Activated T-helper 2 cell treated with anti-CD3 and anti-CD28 coated beads, Interferon-gamma antibody, Interleukin-2, Interleukin-4, amounts not matched to agents 10 μg/mL and 5 μg/mL and 100 μg/mL, durations not matched to agents 14 hours and 24 hours and 36 hours (primary cell): ENCODE measurements at regions of chr20 and their contacts with region 1.

Region 1: DNA sequence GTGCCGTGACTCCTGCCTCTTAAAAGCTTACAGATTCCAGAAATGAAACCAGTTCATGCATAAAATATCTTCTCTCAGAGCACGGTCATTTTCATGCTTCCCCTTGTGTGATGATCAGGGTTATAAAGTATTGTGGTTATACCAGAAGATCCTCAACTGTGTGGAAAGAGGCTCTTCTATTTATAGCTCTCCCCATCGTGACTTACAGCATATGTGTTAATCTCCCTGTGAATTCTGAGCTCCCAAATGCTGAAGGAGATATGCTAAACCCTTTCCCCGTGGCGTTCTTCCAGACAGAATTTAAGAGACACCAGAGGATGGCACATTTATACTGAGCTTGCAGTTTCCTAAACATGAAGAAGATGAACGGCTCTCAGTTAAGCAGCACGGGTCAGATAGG is 158.8 kb downstream of the CDH26 start:
- DNase-seq: no peak
- H3K4me3 Mint-ChIP-seq: no peak overlapping the region
- H3K27ac Mint-ChIP-seq: no peak overlapping the region
- H3K4me1 Mint-ChIP-seq: no peaks in the 10 kb centered on the region
- H3K27me3 Mint-ChIP-seq: peaks cover 11% of the 10 kb centered on the region

Region 2: GRCh38 chr20:59880198-59880597 is 236.9 kb before region 1 on chr20:
- intact Hi-C with region 1: no loop called
- DNase-seq: no peak
- H3K4me3 Mint-ChIP-seq: no peak overlapping the region
- H3K27ac Mint-ChIP-seq: no peak overlapping the region
- H3K4me1 Mint-ChIP-seq: no peaks in the 10 kb centered on the region
- H3K27me3 Mint-ChIP-seq: no peaks in the 10 kb centered on the region

Region 3: DNA sequence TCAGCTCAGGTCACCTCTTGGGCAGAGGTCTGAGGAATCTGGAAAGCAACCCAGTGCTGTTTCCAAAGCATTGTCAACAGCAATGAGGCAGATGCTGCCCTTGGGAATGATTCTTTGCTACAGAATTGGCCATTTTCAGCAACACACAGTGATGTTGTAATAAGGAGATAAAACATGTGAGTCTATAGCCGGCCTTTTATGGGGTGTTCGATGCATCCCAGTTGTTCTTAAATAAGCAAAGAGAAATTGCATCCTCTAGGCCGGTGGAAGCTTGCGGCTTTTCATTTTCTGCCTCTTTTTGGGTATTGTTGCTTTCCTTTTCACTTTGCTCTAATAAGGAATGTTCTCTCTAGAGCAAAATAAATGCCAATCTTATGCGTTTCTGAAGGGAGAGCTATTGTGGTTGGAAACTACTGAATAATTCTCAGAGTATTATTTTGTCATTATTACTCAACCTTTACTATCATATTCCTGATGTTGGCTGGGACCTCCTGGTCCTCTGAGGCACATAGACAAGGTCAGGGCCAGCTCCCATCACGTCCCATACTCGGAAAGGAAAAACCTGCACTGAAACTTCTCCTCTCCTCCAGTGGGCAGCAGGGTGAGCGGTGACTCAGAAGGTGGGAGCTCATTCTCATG is 55.4 kb after region 1 on chr20:
- intact Hi-C with region 1: loop called (anchors 10 kb)
- DNase-seq: no peak
- H3K4me3 Mint-ChIP-seq: no peak overlapping the region
- H3K27ac Mint-ChIP-seq: no peak overlapping the region
- H3K4me1 Mint-ChIP-seq: no peaks in the 10 kb centered on the region
- H3K27me3 Mint-ChIP-seq: no peaks in the 10 kb centered on the region